ENCODE measurements at regions of chr1 and their contacts with region 1.

Region 1: DNA sequence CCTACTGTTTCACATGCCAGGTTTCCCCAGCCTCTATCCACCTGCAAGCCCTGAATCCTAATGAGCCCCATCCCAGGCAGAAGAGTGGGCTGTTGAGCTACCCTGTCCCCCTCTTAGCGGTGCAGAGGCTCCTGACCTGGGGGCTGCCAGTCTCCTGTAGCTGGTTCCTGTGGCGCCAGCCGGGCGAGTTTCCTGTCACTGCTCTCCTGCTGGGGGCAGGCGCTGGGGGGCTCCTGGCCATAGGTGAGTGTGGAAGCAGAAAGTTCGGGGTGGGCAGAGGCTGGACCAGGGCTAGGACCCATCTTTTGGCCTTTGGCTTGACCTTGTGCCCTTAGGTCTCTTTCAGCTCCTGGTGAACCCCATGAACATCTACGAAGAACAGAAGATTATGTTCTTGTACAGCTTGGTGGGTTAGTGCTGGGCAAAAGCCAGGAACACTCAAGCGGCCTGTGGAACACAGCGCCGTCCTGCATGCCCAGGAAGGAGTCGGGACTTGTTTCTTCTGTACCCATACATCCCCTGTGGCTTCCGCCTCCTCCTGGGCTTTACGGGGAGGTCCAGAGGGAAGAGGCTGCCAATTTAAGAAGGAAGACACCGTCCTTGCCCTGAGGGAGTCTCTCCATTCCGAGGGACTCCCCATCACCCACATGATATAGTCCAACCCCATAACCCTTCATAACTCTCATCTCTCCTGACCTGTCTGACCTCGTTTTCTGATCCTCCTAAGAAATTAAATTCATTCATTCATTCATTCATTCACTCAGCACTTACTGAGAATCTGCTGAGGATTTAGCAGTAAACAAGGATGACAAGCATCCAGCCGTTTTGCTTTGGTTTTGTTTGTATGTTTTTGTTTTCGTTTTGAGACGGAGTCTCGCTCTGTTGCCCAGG is 939 bp downstream of the DCST1 start:
- DNase-seq: no peak

Region 2: DNA sequence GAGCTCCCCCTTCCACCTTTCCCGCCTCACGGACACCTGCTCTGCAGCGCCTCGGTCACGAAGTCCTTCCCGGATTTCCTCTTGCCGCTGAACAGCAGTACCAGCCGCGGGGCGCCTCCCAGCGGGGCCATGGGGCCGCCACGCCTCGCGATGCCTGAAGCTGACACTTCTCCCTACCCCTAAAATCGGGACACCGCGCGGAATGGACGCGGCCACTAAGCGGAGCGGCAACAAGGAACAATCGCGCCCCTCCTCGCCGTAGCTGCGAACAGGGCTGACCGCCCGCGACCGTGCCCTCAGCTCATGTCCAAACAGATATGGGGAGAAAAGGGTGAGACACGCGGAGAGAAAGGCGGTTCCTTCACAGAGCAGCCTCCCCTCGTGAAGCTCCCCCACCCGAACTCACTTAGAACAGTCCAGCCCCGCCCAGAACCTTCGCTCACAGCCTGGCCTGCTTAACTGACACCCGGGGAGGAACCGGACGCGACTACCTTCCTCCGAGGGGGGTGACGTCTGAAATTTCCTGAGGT is 97.9 kb before region 1 on chr1 and contains the start of gene PMVK:
- CTCF ChIA-PET with region 1: no interaction called
- POLR2A ChIA-PET with region 1: no interaction called
- DNase-seq: peak; percentile 96

Region 3: GRCh38 chr1:155017041-155017945 is 17.3 kb before region 1 on chr1:
- CTCF ChIA-PET with region 1: interaction called, 12 read pairs
- POLR2A ChIA-PET with region 1: no interaction called
- DNase-seq: peak; percentile 93

Measured in HEK293T (cell line).